ENCODE measurements at regions of chr4 and their contacts with region 1.

Region 1: DNA sequence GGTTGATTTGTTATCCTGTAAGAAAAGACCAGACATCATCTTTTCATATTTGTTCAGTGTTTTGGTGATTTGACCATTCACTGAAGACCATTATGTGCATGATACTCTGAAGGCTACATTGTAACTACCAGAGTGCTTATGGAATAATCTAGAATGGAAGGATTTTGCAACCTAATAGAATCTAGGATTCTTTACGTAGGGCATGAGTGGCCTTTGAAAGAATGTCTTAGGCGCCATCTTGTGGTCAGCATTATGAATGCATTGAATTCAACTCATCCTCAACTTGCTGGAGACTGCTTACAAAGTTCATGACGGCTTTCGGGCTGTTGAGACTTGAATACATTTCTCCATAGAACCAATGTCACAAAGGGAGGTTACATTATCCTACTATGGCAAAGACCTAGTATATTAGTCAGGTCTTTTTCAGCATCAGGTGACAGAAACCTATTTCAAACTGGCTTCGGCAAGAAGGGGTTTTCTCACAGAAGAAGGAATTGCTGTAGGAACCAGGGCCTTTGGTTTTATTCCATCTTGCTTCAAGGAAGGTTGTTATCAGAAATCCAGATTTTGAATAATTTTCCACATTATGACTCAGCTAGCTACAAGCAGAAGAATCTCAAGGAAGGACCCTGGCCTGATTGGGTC is 104.1 kb downstream of the GPAT3 start:
- DNase-seq: peak in 7 of 9 donors; percentile 38 to 66 (median 61)
- ATAC-seq: peak; percentile 79
- H3K4me3 ChIP-seq: no peak overlapping the region
- H3K4me3 Mint-ChIP-seq: no peak overlapping the region
- H3K27ac ChIP-seq: no peak overlapping the region
- H3K27ac Mint-ChIP-seq: no peak overlapping the region
- H3K4me1 ChIP-seq: no peaks in the 10 kb centered on the region
- H3K4me1 Mint-ChIP-seq: peaks cover 0 to 4% (median 3%) of the 10 kb centered on the region in 7 donors
- H3K27me3 ChIP-seq: no peaks in the 10 kb centered on the region
- H3K27me3 Mint-ChIP-seq: peaks cover 0 to 14% (median 5%) of the 10 kb centered on the region in 5 donors

Region 2: DNA sequence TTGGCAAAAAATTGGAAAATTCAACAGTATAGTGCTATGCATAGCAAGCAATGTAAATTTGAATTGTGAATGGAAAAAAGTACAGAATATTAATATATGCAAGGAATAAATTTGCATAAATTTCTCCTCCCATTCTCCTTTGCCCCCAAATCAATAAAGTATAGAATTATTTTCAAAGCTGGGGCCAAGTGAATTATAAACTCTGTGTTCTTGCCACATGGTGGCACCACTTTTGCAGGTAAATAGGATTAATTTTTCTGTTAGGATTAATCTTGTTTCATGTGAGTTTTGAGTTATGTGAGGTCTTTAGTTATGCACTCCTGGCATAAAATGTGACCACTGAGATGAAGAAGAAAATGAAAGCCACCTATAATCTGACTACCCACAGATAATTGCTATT is 585.0 kb before region 1 on chr4:
- CTCF ChIA-PET with region 1: no interaction called
- POLR2A ChIA-PET with region 1: no interaction called
- intact Hi-C with region 1: loop called in 1 of 2 experiments (anchors 5 kb)
- DNase-seq: peak in 6 of 9 donors; percentile 12 to 40 (median 30)
- ATAC-seq: no peak
- H3K4me3 ChIP-seq: no peak overlapping the region
- H3K4me3 Mint-ChIP-seq: no peak overlapping the region
- H3K27ac ChIP-seq: no peak overlapping the region
- H3K27ac Mint-ChIP-seq: no peak overlapping the region
- H3K4me1 ChIP-seq: no peaks in the 10 kb centered on the region
- H3K4me1 Mint-ChIP-seq: peaks cover 0 to 9% (median 0%) of the 10 kb centered on the region in 7 donors
- H3K27me3 ChIP-seq: no peaks in the 10 kb centered on the region
- H3K27me3 Mint-ChIP-seq: no peaks in the 10 kb centered on the region

Region 3: GRCh38 chr4:83413676-83414075 is 226.3 kb before region 1 on chr4:
- CTCF ChIA-PET with region 1: no interaction called
- POLR2A ChIA-PET with region 1: no interaction called
- intact Hi-C with region 1: loop called in 1 of 2 experiments (anchors 5 kb)
- DNase-seq: no peak
- ATAC-seq: no peak
- H3K4me3 ChIP-seq: no peak overlapping the region
- H3K4me3 Mint-ChIP-seq: no peak overlapping the region
- H3K27ac ChIP-seq: no peak overlapping the region
- H3K27ac Mint-ChIP-seq: no peak overlapping the region
- H3K4me1 ChIP-seq: no peaks in the 10 kb centered on the region
- H3K4me1 Mint-ChIP-seq: peaks cover 0 to 3% (median 0%) of the 10 kb centered on the region in 7 donors
- H3K27me3 ChIP-seq: no peaks in the 10 kb centered on the region
- H3K27me3 Mint-ChIP-seq: no peaks in the 10 kb centered on the region

Region 4: DNA sequence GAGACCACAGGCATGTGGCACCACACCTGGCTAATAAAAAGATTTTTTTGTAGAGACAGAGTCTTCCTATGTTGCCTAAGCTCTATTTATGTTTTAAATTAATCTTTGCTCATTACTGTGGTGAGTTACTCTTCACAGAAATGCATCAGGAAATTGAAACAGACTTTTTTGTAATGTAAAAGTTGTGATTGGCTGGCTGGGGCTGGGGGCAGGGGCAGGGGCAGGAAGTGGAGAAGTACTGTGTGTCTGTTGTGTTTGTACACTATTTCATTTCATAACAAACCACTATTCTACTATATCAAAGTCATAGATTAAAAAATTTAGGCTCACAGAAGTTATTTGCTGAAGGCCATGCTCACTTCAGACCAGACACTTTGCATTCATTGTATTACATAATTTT is 136.0 kb before region 1 on chr4:
- CTCF ChIA-PET with region 1: interaction called, 4 read pairs
- POLR2A ChIA-PET with region 1: interaction called, 3 read pairs
- intact Hi-C with region 1: loop called (anchors 1 kb)
- DNase-seq: peak in 6 of 9 donors; percentile 15 to 62 (median 47)
- ATAC-seq: peak; percentile 62
- H3K4me3 ChIP-seq: peak overlapping the region; percentile 1
- H3K4me3 Mint-ChIP-seq: peak overlapping the region; percentile 4 to 70 (median 51)
- H3K27ac ChIP-seq: peak overlapping the region; percentile 51
- H3K27ac Mint-ChIP-seq: peak overlapping the region in 8 of 9 donors; percentile 26 to 94 (median 89)
- H3K4me1 ChIP-seq: peaks cover 3 to 17% of the 10 kb centered on the region in 2 donors
- H3K4me1 Mint-ChIP-seq: peaks cover 10 to 24% (median 18%) of the 10 kb centered on the region in 7 donors
- H3K27me3 ChIP-seq: no peaks in the 10 kb centered on the region
- H3K27me3 Mint-ChIP-seq: no peaks in the 10 kb centered on the region

Region 5: GRCh38 chr4:83708500-83709175 is 68.7 kb after region 1 on chr4:
- CTCF ChIA-PET with region 1: no interaction called
- POLR2A ChIA-PET with region 1: no interaction called
- intact Hi-C with region 1: no loop called
- DNase-seq: no peak
- ATAC-seq: no peak
- H3K4me3 ChIP-seq: no peak overlapping the region
- H3K4me3 Mint-ChIP-seq: no peak overlapping the region
- H3K27ac ChIP-seq: no peak overlapping the region
- H3K27ac Mint-ChIP-seq: no peak overlapping the region
- H3K4me1 ChIP-seq: no peaks in the 10 kb centered on the region
- H3K4me1 Mint-ChIP-seq: no peaks in the 10 kb centered on the region
- H3K27me3 ChIP-seq: no peaks in the 10 kb centered on the region
- H3K27me3 Mint-ChIP-seq: peaks cover 2 to 22% (median 7%) of the 10 kb centered on the region in 5 donors

Region 6: GRCh38 chr4:84258905-84259830 is 619.2 kb after region 1 on chr4:
- CTCF ChIA-PET with region 1: no interaction called
- POLR2A ChIA-PET with region 1: no interaction called
- intact Hi-C with region 1: loop called in 1 of 2 experiments (anchors 1 kb)
- DNase-seq: no peak
- ATAC-seq: no peak
- H3K4me3 ChIP-seq: no peak overlapping the region
- H3K4me3 Mint-ChIP-seq: no peak overlapping the region
- H3K27ac ChIP-seq: no peak overlapping the region
- H3K27ac Mint-ChIP-seq: no peak overlapping the region
- H3K4me1 ChIP-seq: no peaks in the 10 kb centered on the region
- H3K4me1 Mint-ChIP-seq: no peaks in the 10 kb centered on the region
- H3K27me3 ChIP-seq: no peaks in the 10 kb centered on the region
- H3K27me3 Mint-ChIP-seq: peaks cover 0 to 4% (median 0%) of the 10 kb centered on the region in 5 donors

Measured in naive thymus-derived CD4-positive, alpha-beta T cell (primary cell).